ENCODE measurements at regions of chr11 and their contacts with region 1.

Region 1: DNA sequence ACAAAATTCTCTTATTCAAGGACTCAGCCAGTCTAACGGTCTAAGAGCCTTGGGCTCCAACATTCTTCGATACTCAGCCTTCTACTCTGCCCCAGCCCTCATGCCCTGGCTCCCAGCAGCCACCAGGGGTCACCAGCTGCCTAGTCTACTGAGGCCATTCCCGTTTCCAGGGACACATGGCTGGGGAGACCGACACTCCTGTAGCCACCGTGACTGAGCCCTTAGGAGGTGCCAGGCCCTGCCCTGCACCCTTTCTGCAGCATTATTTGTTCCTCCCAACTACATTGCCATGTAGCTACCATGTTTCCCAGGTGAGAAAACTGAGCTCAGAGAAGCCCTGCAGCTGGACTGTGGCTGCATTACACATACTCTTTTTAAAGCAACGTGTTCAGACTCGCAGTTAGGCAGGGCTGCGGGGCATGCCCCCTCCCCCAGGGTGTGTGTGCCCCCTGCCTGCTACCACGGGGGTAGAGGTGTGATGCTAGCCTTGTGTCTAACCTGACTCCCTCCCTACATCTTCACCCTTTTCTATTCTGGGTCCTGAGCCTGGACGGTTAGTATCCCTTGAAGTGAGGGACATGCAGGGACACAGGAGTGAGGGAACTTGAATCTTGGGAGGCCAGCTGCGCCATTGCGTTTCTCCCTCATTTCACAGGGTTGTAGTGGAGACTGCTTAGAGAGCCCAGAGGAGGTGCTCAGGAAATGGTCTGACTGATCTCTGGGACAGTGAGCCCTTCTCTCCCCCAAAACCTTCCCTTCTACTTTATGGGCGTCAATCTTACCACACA is 17.5 kb downstream of the ATG16L2 start:
- DNase-seq: peak; percentile 94

Region 2: GRCh38 chr11:72848846-72849466 is 17.2 kb after region 1 on chr11:
- intact Hi-C with region 1: loop called (anchors 2 kb)
- DNase-seq: no peak

Region 3: DNA sequence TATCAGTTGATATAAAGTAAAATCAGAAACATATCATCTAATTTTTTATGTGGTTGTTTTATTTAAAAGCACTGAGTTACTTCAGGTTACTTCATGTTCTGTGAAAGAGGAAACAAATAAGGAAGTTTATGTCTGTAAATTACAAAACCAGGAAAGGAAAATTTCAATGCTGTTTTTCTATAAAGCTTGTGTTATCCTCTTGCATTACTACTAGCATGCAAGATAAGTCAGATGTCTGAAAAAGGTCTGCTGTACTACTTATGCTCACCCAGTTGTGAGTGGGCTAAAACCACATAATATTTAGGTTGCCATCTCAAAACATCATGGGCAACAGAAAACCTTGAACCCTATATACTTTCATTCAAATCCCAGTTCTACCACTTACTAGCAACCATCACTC is 104.0 kb after region 1 on chr11:
- intact Hi-C with region 1: no loop called
- DNase-seq: no peak

Region 4: GRCh38 chr11:73141848-73142286 is 310.2 kb after region 1 on chr11:
- intact Hi-C with region 1: loop called (anchors 5 kb)
- DNase-seq: peak; percentile 88

Region 5: DNA sequence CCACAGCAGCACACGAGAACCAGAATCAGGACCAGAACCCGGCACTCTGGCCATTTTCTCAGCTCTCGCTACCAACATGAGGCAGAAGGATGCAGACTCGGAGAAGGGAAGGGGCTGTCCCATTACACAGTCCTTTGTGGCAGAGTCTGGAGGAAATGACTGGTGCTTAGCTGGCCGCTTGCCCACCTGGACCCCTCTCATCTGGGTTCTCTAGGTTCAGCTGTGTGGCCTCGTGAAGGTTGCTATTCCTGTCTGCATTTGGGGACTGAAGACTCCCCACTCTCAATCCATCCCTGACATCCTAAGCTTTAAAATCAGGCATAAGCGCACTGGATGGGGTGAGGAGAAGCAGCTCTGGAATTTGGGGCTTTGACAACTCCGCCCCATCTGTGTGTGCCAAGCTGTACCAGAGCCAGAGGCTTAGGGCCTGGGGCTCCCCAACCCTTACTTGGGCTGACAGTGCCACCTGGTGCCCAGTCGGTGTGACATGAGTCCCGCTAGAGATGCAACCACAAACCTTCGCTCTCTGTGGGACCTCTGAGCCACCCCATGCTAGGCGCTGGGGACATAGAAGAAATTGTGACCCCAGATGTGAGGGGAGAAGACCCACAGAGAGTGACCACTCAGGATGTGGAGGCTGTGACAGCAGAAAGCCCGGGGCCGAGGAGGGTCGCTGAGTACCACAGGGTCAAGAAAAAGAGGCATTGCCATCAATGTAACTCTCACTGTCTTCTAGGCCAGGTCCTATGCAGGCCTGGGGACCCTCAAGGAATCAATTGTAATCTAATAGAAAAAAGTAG is 346.3 kb after region 1 on chr11:
- intact Hi-C with region 1: loop called (anchors 1 kb)
- DNase-seq: peak; percentile 92

Region 6: GRCh38 chr11:73189315-73189714 is 357.6 kb after region 1 on chr11:
- intact Hi-C with region 1: no loop called
- DNase-seq: no peak

Region 7: DNA sequence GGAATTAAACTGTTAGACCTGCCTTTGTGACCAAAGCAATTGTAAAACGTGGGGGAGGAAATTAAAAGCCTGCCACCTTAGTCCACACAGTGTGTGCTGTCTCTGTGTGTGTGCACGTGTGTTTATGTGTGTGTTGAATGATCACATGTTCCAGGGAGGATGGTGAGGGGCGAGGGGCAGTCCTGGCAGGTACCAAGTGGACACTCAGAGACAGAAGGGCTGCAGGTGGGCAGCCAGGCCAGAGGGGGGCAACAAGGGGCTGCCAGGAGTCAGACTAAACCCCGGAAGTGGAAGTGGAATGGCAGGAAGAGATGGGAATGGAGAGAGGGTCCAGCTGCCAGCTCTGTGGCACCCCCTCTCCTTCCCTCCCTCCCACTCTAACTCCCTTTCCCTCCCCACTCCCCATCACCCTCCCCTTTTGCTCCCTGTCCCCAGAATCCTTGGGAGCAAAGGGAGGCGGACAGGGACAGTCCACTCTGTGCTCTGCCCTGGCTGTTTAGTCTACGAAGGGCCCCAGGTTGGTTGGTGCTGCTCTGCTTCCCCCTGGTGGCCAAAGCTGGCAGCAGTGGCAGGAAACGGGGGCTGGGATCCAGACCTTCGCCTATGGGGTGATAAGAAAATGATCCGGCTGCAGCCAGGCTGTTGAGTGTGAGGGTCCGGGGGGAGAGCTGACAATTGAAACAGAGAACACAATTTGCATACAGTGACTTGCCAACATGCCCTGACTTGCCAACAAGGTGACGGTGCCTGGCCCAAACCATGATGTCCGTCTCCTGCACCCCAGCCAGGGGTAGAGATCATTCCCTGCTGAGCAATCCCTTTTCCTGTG is 410.8 kb after region 1 on chr11:
- intact Hi-C with region 1: loop called (anchors 5 kb)
- DNase-seq: peak; percentile 90

Region 8: DNA sequence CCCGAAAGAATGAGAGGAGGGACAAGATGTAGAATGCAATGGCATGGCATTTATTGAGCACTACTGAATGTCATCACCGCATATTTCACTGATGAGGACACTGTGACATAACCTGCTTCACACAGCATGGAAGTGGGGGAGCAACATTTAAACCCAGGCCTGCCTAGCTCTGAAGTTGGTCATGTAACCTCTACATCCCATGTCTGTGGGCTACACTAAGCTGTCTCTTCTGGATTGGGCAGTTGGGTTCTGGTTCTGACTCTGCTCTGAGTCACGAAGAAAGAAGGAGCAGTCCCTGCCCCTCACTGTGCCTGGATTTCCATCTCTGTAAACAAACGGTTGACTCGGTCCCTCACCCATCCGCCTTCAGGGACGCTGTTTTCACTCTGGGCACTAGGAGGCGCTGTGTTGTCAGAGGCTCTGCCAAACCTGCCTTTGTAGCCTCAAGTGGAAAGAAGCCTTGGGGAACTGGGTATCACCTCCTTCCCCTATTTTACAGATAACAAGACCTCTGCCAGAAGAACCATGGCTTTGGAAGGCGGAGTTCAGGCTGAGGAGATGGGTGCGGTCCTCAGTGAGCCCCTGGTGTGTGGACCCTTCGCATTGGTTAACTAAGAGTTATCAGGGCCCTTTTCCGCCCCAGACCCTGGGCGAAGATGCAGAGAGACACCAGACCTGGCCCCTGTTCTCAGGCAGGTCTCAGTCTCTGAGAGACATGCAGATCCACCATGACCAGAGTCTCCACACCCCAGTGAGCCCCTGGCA is 463.7 kb after region 1 on chr11:
- intact Hi-C with region 1: loop called (anchors 5 kb)
- DNase-seq: peak; percentile 88